Caco-2 (cell line): ENCODE measurements at regions of chr19 and their contacts with region 1.

Region 1: GRCh38 chr19:1064661-1065605 is 2.0 kb upstream of the ARHGAP45 start:
- DNase-seq: peak; percentile 81 to 89
- H3K4me3 ChIP-seq: peak overlapping the region; percentile 61
- H3K4me3 Mint-ChIP-seq: peak overlapping the region; percentile 84
- H3K27ac Mint-ChIP-seq: peak overlapping the region; percentile 77
- H3K4me1 ChIP-seq: peaks cover 15% of the 10 kb centered on the region
- H3K4me1 Mint-ChIP-seq: no peaks in the 10 kb centered on the region
- H3K27me3 ChIP-seq: no peaks in the 10 kb centered on the region
- H3K27me3 Mint-ChIP-seq: no peaks in the 10 kb centered on the region
- CTCF ChIP-seq: peak; percentile 81 to 84

Region 2: GRCh38 chr19:1020868-1021425 is 44.0 kb before region 1 on chr19 and contains the start of gene TMEM259:
- CTCF ChIA-PET with region 1: interaction called, 8 read pairs
- POLR2A ChIA-PET with region 1: interaction called, 33 read pairs
- intact Hi-C with region 1: loop called (anchors 1 kb)
- DNase-seq: peak; percentile 97
- H3K4me3 ChIP-seq: peak within 1 kb of the TSS; percentile 62
- H3K4me3 Mint-ChIP-seq: peak within 1 kb of the TSS; percentile 95
- H3K27ac Mint-ChIP-seq: peak within 1 kb of the TSS; percentile 99
- H3K4me1 ChIP-seq: peaks cover 23% of the 10 kb centered on the region
- H3K4me1 Mint-ChIP-seq: peaks cover 15% of the 10 kb centered on the region
- H3K27me3 ChIP-seq: no peaks in the 10 kb centered on the region
- H3K27me3 Mint-ChIP-seq: no peaks in the 10 kb centered on the region
- CTCF ChIP-seq: no peak
- total RNA-seq, gene TMEM259: 148 and 154 TPM in 2 replicates

Region 3: GRCh38 chr19:1026189-1027019 is 38.5 kb before region 1 on chr19 and contains the start of gene CNN2:
- CTCF ChIA-PET with region 1: interaction called, 9 read pairs
- POLR2A ChIA-PET with region 1: interaction called, 33 read pairs
- intact Hi-C with region 1: loop called (anchors 1 kb)
- DNase-seq: peak; percentile 81 to 88
- H3K4me3 ChIP-seq: peak within 1 kb of the TSS; percentile 73
- H3K4me3 Mint-ChIP-seq: peak within 1 kb of the TSS; percentile 81
- H3K27ac Mint-ChIP-seq: peak within 1 kb of the TSS; percentile 95
- H3K4me1 ChIP-seq: peaks cover 7% of the 10 kb centered on the region; the same call in 1 of the 2 replicates
- H3K4me1 Mint-ChIP-seq: peaks cover 17% of the 10 kb centered on the region
- H3K27me3 ChIP-seq: no peaks in the 10 kb centered on the region
- H3K27me3 Mint-ChIP-seq: no peaks in the 10 kb centered on the region
- CTCF ChIP-seq: no peak
- total RNA-seq, gene CNN2: 194 and 221 TPM in 2 replicates

Region 4: DNA sequence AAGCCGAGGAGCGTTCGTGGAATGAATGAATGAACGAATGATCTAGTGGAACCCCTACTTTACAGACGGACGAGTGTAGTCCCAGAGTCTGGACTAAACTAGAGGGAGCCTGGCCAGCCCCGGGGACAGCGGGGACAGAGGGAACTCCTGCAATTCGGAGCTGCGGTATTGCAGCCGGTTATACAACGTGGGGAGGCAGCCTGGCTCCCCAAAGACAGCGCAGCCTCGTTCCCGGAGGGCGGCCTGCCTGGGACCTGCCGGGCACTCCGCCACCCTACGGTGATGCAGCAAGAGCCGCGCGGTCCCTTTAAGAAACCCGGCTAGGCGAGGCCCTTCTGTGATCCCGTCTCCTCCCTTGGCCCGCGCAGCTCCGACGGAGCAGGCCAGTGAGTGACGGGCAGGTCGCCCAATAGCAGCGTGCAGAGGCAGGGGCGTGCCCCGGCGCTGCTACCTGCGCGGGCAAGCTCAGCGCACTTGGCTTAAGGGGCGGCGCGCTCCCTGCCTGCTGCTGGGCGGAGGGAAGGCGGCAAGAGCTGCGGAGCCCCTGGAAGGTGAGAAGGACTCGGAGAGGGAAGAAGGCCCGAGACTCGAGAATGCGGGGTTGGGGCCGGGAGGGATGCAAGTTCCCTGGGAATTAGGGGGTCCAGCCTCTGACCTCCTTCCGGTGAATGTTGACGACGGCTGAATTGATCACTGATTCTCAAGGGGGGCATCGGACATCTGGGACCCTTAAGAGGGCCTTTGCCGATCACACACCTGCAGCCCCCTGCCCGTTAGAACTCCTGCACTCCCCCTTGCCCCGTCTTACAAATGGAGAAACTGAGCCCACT is 25.1 kb before region 1 on chr19 and contains the start of gene ABCA7:
- CTCF ChIA-PET with region 1: interaction called, 4 read pairs
- POLR2A ChIA-PET with region 1: interaction called, 6 read pairs
- intact Hi-C with region 1: loop called (anchors 1 kb)
- DNase-seq: peak; percentile 98 to 99
- H3K4me3 ChIP-seq: peak within 1 kb of the TSS; percentile 78
- H3K4me3 Mint-ChIP-seq: peak within 1 kb of the TSS; percentile 91
- H3K27ac Mint-ChIP-seq: peak within 1 kb of the TSS; percentile 91
- H3K4me1 ChIP-seq: peaks cover 10% of the 10 kb centered on the region
- H3K4me1 Mint-ChIP-seq: no peaks in the 10 kb centered on the region
- H3K27me3 ChIP-seq: no peaks in the 10 kb centered on the region
- H3K27me3 Mint-ChIP-seq: no peaks in the 10 kb centered on the region
- CTCF ChIP-seq: no peak
- total RNA-seq, gene ABCA7: 43.5 and 45.9 TPM in 2 replicates

Region 5: DNA sequence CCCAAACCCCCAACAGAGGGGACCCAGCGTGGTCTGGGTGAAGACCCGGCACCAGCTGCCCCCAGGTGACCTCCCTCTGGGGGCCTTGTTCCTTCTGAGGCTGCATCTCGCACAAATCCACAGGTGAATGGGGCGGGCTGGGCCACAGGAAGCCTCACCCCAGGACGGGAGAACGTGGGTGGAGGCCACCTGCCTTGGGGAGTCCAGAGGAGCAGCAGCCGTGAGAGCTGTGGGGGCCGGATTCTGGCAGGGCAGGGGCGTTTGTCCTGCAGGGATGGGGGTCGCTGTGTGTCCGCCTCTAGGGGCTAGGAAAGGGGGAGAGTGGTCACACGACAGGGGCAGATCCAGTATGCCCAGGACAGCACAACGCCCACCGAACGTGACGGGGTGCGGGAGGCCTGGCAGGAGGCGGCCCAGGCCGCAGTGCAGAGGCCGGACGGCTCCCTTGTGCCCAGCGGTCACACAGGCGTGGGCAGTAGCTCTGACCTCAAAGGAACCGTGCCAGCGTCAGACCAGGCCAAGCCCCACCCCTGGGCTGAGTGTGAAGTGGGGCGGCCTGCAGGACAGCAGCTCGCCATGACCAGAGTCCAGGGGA is 23.6 kb after region 1 on chr19:
- CTCF ChIA-PET with region 1: no interaction called
- POLR2A ChIA-PET with region 1: no interaction called
- intact Hi-C with region 1: no loop called
- DNase-seq: no peak
- H3K4me3 ChIP-seq: no peak overlapping the region
- H3K4me3 Mint-ChIP-seq: no peak overlapping the region
- H3K27ac Mint-ChIP-seq: peak overlapping the region; percentile 60
- H3K4me1 ChIP-seq: no peaks in the 10 kb centered on the region
- H3K4me1 Mint-ChIP-seq: no peaks in the 10 kb centered on the region
- H3K27me3 ChIP-seq: no peaks in the 10 kb centered on the region
- H3K27me3 Mint-ChIP-seq: no peaks in the 10 kb centered on the region
- CTCF ChIP-seq: no peak

Region 6: DNA sequence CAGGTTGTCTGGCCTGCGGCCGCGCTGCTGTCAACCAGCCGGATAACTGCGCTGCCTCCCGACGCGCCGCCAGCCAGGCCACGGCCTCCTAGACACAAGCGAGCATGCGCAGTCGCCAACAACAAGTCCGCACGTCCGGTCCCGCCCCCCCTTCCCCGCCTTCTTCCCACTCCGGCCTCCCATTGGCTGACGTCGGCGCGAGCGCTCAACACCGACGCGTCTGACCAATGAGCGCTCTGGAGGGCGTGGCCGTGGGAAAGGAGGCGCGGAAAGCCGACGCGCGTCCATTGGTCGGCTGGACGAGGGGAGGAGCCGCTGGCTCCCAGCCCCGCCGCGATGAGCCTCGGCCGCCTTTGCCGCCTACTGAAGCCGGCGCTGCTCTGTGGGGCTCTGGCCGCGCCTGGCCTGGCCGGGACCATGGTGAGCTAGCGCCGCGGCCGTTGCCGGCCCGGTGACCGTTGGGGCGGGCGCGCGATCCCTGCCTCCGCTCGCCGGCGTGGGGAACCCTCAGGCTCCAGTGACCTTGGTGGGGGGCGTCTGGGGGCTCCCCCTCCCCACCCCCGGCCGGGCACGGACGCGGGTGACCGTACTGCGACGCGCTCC is 38.9 kb after region 1 on chr19 and contains the start of gene GPX4:
- CTCF ChIA-PET with region 1: no interaction called
- POLR2A ChIA-PET with region 1: interaction called, 19 read pairs
- intact Hi-C with region 1: loop called (anchors 2 kb)
- DNase-seq: peak; percentile 96 to 98
- H3K4me3 ChIP-seq: peak within 1 kb of the TSS; percentile 97
- H3K4me3 Mint-ChIP-seq: peak within 1 kb of the TSS; percentile 68
- H3K27ac Mint-ChIP-seq: peak within 1 kb of the TSS; percentile 73
- H3K4me1 ChIP-seq: peaks cover 28% of the 10 kb centered on the region
- H3K4me1 Mint-ChIP-seq: peaks cover 4% of the 10 kb centered on the region
- H3K27me3 ChIP-seq: no peaks in the 10 kb centered on the region
- H3K27me3 Mint-ChIP-seq: no peaks in the 10 kb centered on the region
- CTCF ChIP-seq: no peak
- total RNA-seq, gene GPX4: 500 and 546 TPM in 2 replicates